ENCODE measurements at regions of chr14 and their contacts with region 1.

Region 1: GRCh38 chr14:69818757-69819191 is 21.7 kb upstream of the SLC10A1 start:
- DNase-seq: peak; percentile 13 to 24
- H3K4me3 ChIP-seq: no peak overlapping the region
- H3K27ac ChIP-seq: no peak overlapping the region
- H3K4me1 ChIP-seq: peaks cover 0 to 4% of the 10 kb centered on the region in 2 donors
- H3K27me3 ChIP-seq: no peaks in the 10 kb centered on the region
- CTCF ChIP-seq: peak; percentile 59 to 90 (median 84)
- POLR2A ChIP-seq: no peak

Region 2: GRCh38 chr14:70027785-70028428 is 209.1 kb after region 1 on chr14:
- intact Hi-C with region 1: loop called (anchors 2 kb)
- DNase-seq: peak; percentile 69 to 74
- H3K4me3 ChIP-seq: no peak overlapping the region
- H3K27ac ChIP-seq: no peak overlapping the region
- H3K4me1 ChIP-seq: peaks cover under 1 to 1% of the 10 kb centered on the region in 2 donors
- H3K27me3 ChIP-seq: no peaks in the 10 kb centered on the region
- CTCF ChIP-seq: peak; percentile 87 to 96 (median 92)
- POLR2A ChIP-seq: peak in 1 of 2 donors; percentile 6